Prostate gland (tissue), 2 donors: ENCODE measurements at regions of chr2 and their contacts with region 1.

Region 1: DNA sequence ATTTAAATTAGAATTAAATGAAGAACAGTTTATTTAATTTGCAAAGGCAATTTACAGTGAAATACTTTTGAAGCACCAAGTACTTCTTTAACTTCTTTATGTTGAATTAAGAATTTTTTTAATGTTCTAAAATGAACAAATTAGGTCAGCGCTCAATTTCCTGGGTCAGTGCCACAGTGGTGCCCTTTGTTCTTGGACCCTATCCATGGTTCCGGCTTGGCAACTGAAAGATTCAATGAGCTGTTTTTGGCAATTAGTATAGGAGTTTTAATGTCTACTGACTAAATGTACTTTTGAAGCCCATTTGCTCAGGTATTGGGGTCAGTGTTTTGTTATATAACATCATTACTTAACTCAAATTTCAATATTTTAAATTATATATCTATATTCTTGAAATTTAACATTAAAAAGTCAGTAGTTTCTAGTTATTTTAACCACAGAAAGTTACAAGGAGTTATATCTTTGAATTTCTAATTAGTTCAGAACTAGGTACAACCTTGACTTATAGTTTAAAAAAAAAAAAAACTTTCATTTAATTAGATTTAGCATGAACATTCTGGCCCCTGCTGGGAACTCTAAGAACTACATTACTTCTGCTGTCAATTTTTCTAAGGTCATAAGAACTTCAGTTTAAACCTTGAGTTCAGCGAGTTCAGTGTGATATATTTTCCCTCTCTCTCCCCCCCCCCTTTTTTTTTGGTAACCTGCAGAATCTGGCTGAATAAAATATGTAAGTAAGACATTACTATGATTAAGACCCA is 7.6 kb upstream of the MSTN start:
- DNase-seq: peak; percentile 43
- H3K4me3 ChIP-seq: no peak overlapping the region
- H3K27ac ChIP-seq: no peak overlapping the region
- H3K4me1 ChIP-seq: no peaks in the 10 kb centered on the region
- H3K27me3 ChIP-seq: no peaks in the 10 kb centered on the region
- CTCF ChIP-seq: peak; percentile 42 to 79 (median 52)
- POLR2A ChIP-seq: no peak

Region 2: GRCh38 chr2:189674374-189675112 is 395.6 kb before region 1 on chr2 and contains the start of gene ANKAR:
- intact Hi-C with region 1: loop called (anchors 10 kb)
- DNase-seq: peak; percentile 80
- H3K4me3 ChIP-seq: peak within 1 kb of the TSS; percentile 53 to 72
- H3K27ac ChIP-seq: peak within 1 kb of the TSS; percentile 94 to 98
- H3K4me1 ChIP-seq: no peaks in the 10 kb centered on the region
- H3K27me3 ChIP-seq: no peaks in the 10 kb centered on the region
- CTCF ChIP-seq: peak; percentile 47 to 88 (median 80)
- POLR2A ChIP-seq: peak; percentile 48
- total RNA-seq, gene ANKAR: 10.3 to 13.5 TPM

Region 3: GRCh38 chr2:189751080-189751658 is 318.9 kb before region 1 on chr2:
- intact Hi-C with region 1: loop called (anchors 5 kb)
- DNase-seq: no peak
- H3K4me3 ChIP-seq: no peak overlapping the region
- H3K27ac ChIP-seq: no peak overlapping the region
- H3K4me1 ChIP-seq: no peaks in the 10 kb centered on the region
- H3K27me3 ChIP-seq: no peaks in the 10 kb centered on the region
- CTCF ChIP-seq: peak; percentile 17 to 55 (median 36)
- POLR2A ChIP-seq: no peak

Region 4: GRCh38 chr2:189798312-189799029 is 271.6 kb before region 1 on chr2:
- intact Hi-C with region 1: loop called (anchors 2 kb)
- DNase-seq: no peak
- H3K4me3 ChIP-seq: no peak overlapping the region
- H3K27ac ChIP-seq: no peak overlapping the region
- H3K4me1 ChIP-seq: no peaks in the 10 kb centered on the region
- H3K27me3 ChIP-seq: no peaks in the 10 kb centered on the region
- CTCF ChIP-seq: peak in 2 of 4 experiments; percentile 40 to 45
- POLR2A ChIP-seq: no peak

Region 5: GRCh38 chr2:189899101-189899500 is 171.0 kb before region 1 on chr2:
- intact Hi-C with region 1: no loop called
- DNase-seq: no peak
- H3K4me3 ChIP-seq: no peak overlapping the region
- H3K27ac ChIP-seq: no peak overlapping the region
- H3K4me1 ChIP-seq: no peaks in the 10 kb centered on the region
- H3K27me3 ChIP-seq: no peaks in the 10 kb centered on the region
- CTCF ChIP-seq: no peak
- POLR2A ChIP-seq: no peak